PC-3 (cell line): ENCODE measurements at regions of chr4 and their contacts with region 1.

Region 1: DNA sequence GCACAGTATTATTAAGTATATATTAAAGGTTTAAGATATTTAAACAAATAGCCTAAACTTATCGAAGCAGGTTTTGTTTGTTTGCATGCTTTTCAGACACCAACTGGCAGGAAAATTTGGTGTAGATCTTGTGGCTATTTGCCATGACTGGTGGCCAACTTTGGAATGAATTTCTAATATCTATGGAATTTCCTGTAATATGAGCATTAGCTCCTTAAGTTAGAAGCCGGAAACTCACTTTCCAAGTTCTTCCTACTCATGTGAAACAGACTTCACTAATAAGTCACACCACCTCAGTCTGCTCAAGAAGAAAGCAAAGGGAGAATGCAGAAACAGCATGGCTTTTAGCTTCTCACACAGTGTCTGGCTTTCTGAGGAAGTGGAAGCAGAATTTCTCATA is 563.9 kb downstream of the GRXCR1 start:
- DNase-seq: peak; percentile 91
- ATAC-seq: peak; percentile 57
- H3K4me3 ChIP-seq: peak overlapping the region; percentile 13; the same call in 1 of the 2 replicates
- H3K27ac ChIP-seq: peak overlapping the region; percentile 87
- H3K4me1 ChIP-seq: peaks cover 35% of the 10 kb centered on the region
- H3K27me3 ChIP-seq: no peaks in the 10 kb centered on the region
- CTCF ChIP-seq: no peak

Region 2: DNA sequence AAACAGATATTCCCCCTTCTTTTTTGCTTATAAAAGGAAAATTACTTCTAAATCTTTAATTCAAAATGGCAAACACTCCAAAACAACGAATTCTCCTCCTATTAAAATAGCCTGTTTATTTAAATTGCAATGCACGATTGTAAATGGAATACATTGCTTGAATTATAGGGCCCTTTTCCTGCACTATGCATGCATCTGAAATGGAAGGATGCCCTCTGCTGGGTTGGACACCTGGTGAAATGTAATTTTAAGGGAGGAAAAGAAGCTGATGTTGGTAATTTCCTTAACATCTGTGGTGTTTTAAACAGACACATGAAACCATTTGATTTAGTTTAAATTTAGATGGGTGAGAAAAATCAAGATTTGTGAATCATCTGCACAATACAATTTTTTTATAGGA is 491.1 kb before region 1 on chr4:
- CTCF ChIA-PET with region 1: no interaction called
- POLR2A ChIA-PET with region 1: no interaction called
- intact Hi-C with region 1: no loop called
- DNase-seq: peak; percentile 48
- ATAC-seq: peak; percentile 60
- H3K4me3 ChIP-seq: no peak overlapping the region
- H3K27ac ChIP-seq: no peak overlapping the region
- H3K4me1 ChIP-seq: no peaks in the 10 kb centered on the region
- H3K27me3 ChIP-seq: no peaks in the 10 kb centered on the region
- CTCF ChIP-seq: peak; percentile 65

Region 3: DNA sequence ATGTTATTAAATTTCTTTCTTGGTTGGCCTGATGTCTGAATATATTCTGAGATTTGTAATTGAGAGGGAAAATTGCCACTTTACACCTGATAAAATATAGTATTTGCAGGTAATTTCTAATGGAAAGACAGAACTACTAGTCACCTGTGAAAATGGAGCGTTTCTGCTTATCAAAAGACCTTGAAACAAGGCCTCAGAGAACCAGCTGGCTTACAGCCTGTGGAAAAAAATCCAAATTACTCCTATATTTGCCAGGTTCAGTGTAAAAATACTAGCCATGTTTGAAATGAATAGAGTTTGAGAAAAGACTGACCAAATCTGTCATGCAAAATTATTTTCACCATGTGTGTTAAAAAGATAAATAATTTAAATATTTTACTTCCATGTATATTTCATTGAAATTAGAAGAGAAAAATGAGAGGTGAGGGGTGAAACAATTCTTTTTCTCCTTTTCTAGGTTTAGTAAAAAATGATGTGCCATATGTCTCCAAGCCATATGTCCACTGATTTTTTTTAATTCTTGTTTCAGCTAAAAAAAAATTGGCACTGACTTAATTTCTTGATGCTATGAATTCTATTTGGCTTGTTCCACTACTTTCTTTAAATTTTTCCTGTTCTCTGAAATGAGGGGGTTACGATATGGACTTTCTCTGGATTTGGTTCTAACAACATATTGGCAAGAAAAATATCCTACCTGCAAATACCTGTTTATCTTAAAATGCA is 99.0 kb before region 1 on chr4:
- CTCF ChIA-PET with region 1: no interaction called
- POLR2A ChIA-PET with region 1: no interaction called
- intact Hi-C with region 1: loop called (anchors 10 kb)
- DNase-seq: no peak
- ATAC-seq: no peak
- H3K4me3 ChIP-seq: no peak overlapping the region
- H3K27ac ChIP-seq: no peak overlapping the region
- H3K4me1 ChIP-seq: peaks cover 20% of the 10 kb centered on the region
- H3K27me3 ChIP-seq: no peaks in the 10 kb centered on the region
- CTCF ChIP-seq: no peak